GM12878 (cell line): ENCODE measurements at regions of chr6 and their contacts with region 1.

Region 1: GRCh38 chr6:72411872-72412708 is 209.8 kb upstream of the KCNQ5 start:
- DNase-seq: peak; percentile 59
- ATAC-seq: peak; percentile 87
- H3K4me3 ChIP-seq: no peak overlapping the region
- H3K27ac ChIP-seq: no peak overlapping the region
- H3K4me1 ChIP-seq: no peaks in the 10 kb centered on the region
- H3K27me3 ChIP-seq: peaks cover 1 to 3% of the 10 kb centered on the region in 2 experiments; a peak in 2 of 4 replicates
- CTCF ChIP-seq: peak; percentile 100; a peak in 5 of 6 replicates
- EP300 ChIP-seq: no peak
- POLR2A ChIP-seq: no peak
- RAD21 ChIP-seq: peak; percentile 98

Region 2: GRCh38 chr6:72425003-72425681 is 13.1 kb after region 1 on chr6:
- CTCF ChIA-PET with region 1: interaction called, 40 read pairs
- POLR2A ChIA-PET with region 1: no interaction called
- RAD21 ChIA-PET with region 1: interaction called, 5 read pairs
- SMC1A ChIA-PET with region 1: interaction called, 8 read pairs
- in situ Hi-C with region 1: no loop called
- intact Hi-C with region 1: no loop called
- DNase-seq: no peak
- ATAC-seq: no peak
- H3K4me3 ChIP-seq: no peak overlapping the region
- H3K27ac ChIP-seq: no peak overlapping the region
- H3K4me1 ChIP-seq: no peaks in the 10 kb centered on the region
- H3K27me3 ChIP-seq: no peaks in the 10 kb centered on the region
- CTCF ChIP-seq: no peak
- EP300 ChIP-seq: no peak
- POLR2A ChIP-seq: no peak
- RAD21 ChIP-seq: no peak

Region 3: DNA sequence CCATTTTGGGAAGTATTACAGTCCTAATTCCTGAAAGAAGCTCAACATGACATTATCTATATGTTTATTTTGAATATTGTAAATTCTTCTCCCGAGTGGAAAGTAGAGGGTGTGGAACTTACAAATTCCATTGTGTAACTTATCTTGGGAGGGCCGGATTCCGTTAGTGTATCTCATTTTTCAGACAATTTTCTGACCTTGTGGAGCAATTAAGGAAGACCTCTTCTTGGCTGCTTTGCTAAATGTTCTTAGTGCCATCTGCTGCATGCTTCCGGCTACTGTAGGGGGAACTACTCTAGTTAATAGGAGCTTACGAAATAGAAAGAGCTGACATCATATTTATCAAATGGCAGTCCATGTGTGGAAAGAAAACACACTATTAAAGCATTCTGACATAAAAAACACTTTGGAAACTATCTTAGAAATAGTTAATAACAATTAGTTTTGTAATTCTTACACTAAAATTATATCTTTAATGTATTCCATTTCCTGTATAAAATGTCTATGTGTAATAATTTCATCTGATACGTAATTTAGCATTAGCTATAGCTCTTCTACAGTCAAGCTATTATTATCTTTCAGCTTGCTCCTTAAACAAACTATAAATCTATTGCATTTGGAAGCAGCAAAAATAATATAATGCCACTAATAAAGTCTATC is 168.3 kb after region 1 on chr6:
- CTCF ChIA-PET with region 1: interaction called, 29 read pairs
- POLR2A ChIA-PET with region 1: no interaction called
- RAD21 ChIA-PET with region 1: interaction called, 9 read pairs
- SMC1A ChIA-PET with region 1: interaction called, 10 read pairs
- in situ Hi-C with region 1: no loop called
- intact Hi-C with region 1: loop called (anchors 5 kb)
- DNase-seq: no peak
- ATAC-seq: peak; percentile 88
- H3K4me3 ChIP-seq: no peak overlapping the region
- H3K27ac ChIP-seq: no peak overlapping the region
- H3K4me1 ChIP-seq: no peaks in the 10 kb centered on the region
- H3K27me3 ChIP-seq: no peaks in the 10 kb centered on the region
- CTCF ChIP-seq: peak; percentile 28 to 37 (median 34); a peak in 5 of 6 replicates
- EP300 ChIP-seq: no peak
- POLR2A ChIP-seq: no peak
- RAD21 ChIP-seq: peak; percentile 37

Region 4: GRCh38 chr6:73329201-73329600 is 917.1 kb after region 1 on chr6:
- CTCF ChIA-PET with region 1: interaction called, 56 read pairs
- POLR2A ChIA-PET with region 1: no interaction called
- RAD21 ChIA-PET with region 1: interaction called, 22 read pairs
- SMC1A ChIA-PET with region 1: interaction called, 9 read pairs
- in situ Hi-C with region 1: loop called (anchors 5 kb)
- intact Hi-C with region 1: loop called (anchors 1 kb)
- DNase-seq: no peak
- ATAC-seq: peak; percentile 69
- H3K4me3 ChIP-seq: no peak overlapping the region
- H3K27ac ChIP-seq: no peak overlapping the region
- H3K4me1 ChIP-seq: peaks cover 4% of the 10 kb centered on the region; the same call in 1 of the 2 replicates
- H3K27me3 ChIP-seq: no peaks in the 10 kb centered on the region
- CTCF ChIP-seq: no peak
- EP300 ChIP-seq: no peak
- POLR2A ChIP-seq: no peak
- RAD21 ChIP-seq: no peak